Panc1 (cell line): ENCODE measurements at regions of chr12 and their contacts with region 1.

Region 1: DNA sequence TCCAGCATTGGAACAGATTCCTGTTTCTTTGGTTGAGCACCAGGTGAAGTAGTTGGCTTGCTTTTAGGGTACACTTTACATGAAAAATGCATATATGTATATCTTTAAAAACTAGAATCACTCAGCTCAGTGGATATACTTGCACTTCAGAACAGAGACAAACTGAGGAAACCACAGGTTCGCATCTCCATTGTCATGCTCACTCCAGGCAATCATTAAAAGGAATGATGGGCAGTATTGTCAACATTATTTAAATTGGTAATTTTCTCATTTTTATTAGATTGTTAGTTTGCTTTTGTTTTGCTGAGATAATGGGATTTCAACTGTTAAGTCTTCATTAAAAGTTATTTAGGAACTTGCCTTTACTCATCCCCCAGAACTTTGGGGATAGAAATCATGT is 71.0 kb upstream of the NELL2 start:
- DNase-seq: no peak
- ATAC-seq: no peak
- H3K4me3 ChIP-seq: no peak overlapping the region
- H3K27ac ChIP-seq: no peak overlapping the region
- H3K4me1 ChIP-seq: no peaks in the 10 kb centered on the region
- H3K27me3 ChIP-seq: no peaks in the 10 kb centered on the region; the same call in 1 of the 2 replicates
- CTCF ChIP-seq: no peak

Region 2: DNA sequence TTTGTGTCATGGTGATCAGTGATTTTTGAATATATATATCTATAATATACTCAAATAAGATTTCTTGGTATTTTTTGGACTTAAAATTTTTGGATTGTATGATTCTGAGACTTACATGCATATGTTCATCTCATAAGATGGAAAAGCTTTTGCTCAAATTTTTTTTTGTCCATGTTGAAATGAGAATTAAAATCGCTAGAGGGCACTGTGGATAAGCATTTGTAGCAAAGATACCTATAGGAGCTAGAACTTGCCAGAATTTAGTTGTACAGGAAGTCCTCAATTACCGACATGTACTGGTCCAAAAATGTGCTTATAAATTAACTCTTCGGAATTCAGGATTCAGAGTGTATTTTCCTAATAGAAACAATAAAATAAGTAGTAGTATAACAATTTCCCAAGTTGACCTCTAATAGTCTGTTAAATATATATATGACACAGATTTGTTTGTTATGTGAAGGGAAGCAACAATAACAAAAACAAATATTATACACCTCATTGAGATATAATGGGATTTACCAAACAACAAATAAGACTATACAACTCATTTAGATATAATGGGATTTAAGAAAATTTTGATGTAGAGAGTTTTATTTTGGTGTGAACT is 931.7 kb before region 1 on chr12:
- CTCF ChIA-PET with region 1: no interaction called
- POLR2A ChIA-PET with region 1: no interaction called
- in situ Hi-C with region 1: no loop called
- intact Hi-C with region 1: loop called (anchors 5 kb)
- DNase-seq: peak; percentile 33
- ATAC-seq: no peak
- H3K4me3 ChIP-seq: no peak overlapping the region
- H3K27ac ChIP-seq: no peak overlapping the region
- H3K4me1 ChIP-seq: no peaks in the 10 kb centered on the region
- H3K27me3 ChIP-seq: no peaks in the 10 kb centered on the region
- CTCF ChIP-seq: peak; percentile 66; the same call in 1 of the 2 replicates

Region 3: DNA sequence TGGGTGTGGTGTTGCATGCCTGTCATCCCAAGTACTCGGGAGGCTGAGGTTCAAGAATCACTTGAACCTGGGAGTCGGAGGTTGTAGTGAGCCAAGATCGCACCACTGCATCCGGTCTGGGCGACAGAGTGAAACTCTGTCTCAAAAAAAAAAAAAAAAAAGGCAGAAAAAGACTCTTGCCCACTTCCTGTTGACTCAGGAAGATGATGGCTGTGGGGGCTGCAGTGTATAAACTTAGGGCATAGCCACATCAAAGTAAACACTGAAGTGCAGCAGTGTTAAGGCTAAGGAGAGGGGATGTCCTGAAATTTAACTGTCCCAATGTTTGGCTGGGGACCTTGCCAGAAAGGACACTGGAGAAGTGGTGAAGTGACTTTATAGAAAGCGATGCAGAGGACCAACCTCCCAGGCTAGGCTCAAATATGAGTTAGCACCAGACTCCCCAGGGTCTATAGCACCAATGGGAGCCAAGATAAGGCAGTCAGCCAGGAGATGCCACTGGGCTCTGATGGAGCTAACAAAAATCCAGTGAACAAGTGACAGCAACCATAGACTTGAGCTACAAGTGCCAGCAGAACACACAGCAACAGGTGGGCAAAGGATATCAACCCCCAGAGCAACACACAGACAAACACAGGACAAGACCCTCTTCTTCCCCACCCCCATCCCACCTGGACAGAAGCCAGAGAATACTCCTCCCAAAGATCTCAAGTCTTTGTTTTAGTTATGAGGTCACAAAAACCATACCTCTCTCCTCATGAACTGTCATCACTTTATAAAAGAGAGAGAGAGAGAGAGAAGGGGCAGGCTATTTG is 99.1 kb before region 1 on chr12:
- CTCF ChIA-PET with region 1: no interaction called
- POLR2A ChIA-PET with region 1: no interaction called
- in situ Hi-C with region 1: no loop called
- intact Hi-C with region 1: no loop called
- DNase-seq: no peak
- ATAC-seq: no peak
- H3K4me3 ChIP-seq: no peak overlapping the region
- H3K27ac ChIP-seq: no peak overlapping the region
- H3K4me1 ChIP-seq: no peaks in the 10 kb centered on the region
- H3K27me3 ChIP-seq: no peaks in the 10 kb centered on the region
- CTCF ChIP-seq: no peak

Region 4: DNA sequence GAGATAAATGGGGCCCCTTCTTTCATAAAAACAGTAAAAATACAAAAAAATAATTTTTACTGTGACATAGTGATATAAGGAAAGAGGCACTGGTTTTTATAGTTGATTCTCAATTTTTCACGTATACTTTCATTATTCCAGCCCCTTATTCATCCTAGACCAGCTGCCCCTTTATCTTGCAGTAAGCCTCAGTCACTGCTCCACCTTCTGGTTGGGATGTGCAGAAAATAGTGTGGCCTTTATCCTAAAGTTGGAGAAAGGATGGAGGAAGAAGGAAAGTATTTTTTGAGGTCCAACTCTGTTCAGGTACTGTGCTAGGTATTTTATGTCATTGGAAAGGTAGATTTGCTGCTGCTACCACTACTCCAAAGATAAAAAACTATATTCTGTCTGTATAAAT is 441.4 kb after region 1 on chr12:
- CTCF ChIA-PET with region 1: no interaction called
- POLR2A ChIA-PET with region 1: no interaction called
- in situ Hi-C with region 1: no loop called
- intact Hi-C with region 1: no loop called
- DNase-seq: no peak
- ATAC-seq: no peak
- H3K4me3 ChIP-seq: no peak overlapping the region
- H3K27ac ChIP-seq: no peak overlapping the region
- H3K4me1 ChIP-seq: no peaks in the 10 kb centered on the region
- H3K27me3 ChIP-seq: no peaks in the 10 kb centered on the region
- CTCF ChIP-seq: peak; percentile 42; the same call in 1 of the 2 replicates

Region 5: GRCh38 chr12:45402288-45402687 is 455.1 kb after region 1 on chr12:
- CTCF ChIA-PET with region 1: no interaction called
- POLR2A ChIA-PET with region 1: no interaction called
- in situ Hi-C with region 1: no loop called
- intact Hi-C with region 1: no loop called
- DNase-seq: no peak
- ATAC-seq: no peak
- H3K4me3 ChIP-seq: no peak overlapping the region
- H3K27ac ChIP-seq: no peak overlapping the region
- H3K4me1 ChIP-seq: no peaks in the 10 kb centered on the region
- H3K27me3 ChIP-seq: no peaks in the 10 kb centered on the region
- CTCF ChIP-seq: no peak